Activated B cell treated with CpG ODN at 0.5 μM for 24 hours (primary cell): ENCODE measurements at regions of chr18 and their contacts with region 1.

Region 1: GRCh38 chr18:35497370-35498197 is at the start of gene INO80C:
- DNase-seq: peak; percentile 95
- ATAC-seq: peak; percentile 88
- H3K4me3 Mint-ChIP-seq: peak within 1 kb of the TSS; percentile 100
- H3K27ac Mint-ChIP-seq: peak within 1 kb of the TSS; percentile 100
- H3K4me1 Mint-ChIP-seq: peaks cover 51% of the 10 kb centered on the region
- H3K27me3 Mint-ChIP-seq: no peaks in the 10 kb centered on the region
- CTCF ChIP-seq: no peak
- total RNA-seq, gene INO80C: 31.6 and 35.9 TPM in 2 replicates

Region 2: GRCh38 chr18:34976899-34977837 is 520.4 kb before region 1 on chr18:
- CTCF ChIA-PET with region 1: no interaction called
- POLR2A ChIA-PET with region 1: no interaction called
- intact Hi-C with region 1: loop called (anchors 5 kb)
- DNase-seq: peak; percentile 77
- ATAC-seq: peak; percentile 76
- H3K4me3 Mint-ChIP-seq: peak overlapping the region; percentile 89
- H3K27ac Mint-ChIP-seq: no peak overlapping the region
- H3K4me1 Mint-ChIP-seq: peaks cover 23% of the 10 kb centered on the region
- H3K27me3 Mint-ChIP-seq: peaks cover 18% of the 10 kb centered on the region
- CTCF ChIP-seq: no peak

Region 3: GRCh38 chr18:35290073-35290735 is 207.4 kb before region 1 on chr18 and contains the start of gene ZSCAN30:
- CTCF ChIA-PET with region 1: interaction called, 3 read pairs
- POLR2A ChIA-PET with region 1: interaction called, 7 read pairs
- intact Hi-C with region 1: loop called (anchors 2 kb)
- DNase-seq: peak; percentile 92
- ATAC-seq: peak; percentile 97
- H3K4me3 Mint-ChIP-seq: peak within 1 kb of the TSS; percentile 100
- H3K27ac Mint-ChIP-seq: peak within 1 kb of the TSS; percentile 99
- H3K4me1 Mint-ChIP-seq: peaks cover 51% of the 10 kb centered on the region
- H3K27me3 Mint-ChIP-seq: peaks cover 2% of the 10 kb centered on the region
- CTCF ChIP-seq: no peak
- total RNA-seq, gene ZSCAN30: 21.2 and 23.8 TPM in 2 replicates

Region 4: DNA sequence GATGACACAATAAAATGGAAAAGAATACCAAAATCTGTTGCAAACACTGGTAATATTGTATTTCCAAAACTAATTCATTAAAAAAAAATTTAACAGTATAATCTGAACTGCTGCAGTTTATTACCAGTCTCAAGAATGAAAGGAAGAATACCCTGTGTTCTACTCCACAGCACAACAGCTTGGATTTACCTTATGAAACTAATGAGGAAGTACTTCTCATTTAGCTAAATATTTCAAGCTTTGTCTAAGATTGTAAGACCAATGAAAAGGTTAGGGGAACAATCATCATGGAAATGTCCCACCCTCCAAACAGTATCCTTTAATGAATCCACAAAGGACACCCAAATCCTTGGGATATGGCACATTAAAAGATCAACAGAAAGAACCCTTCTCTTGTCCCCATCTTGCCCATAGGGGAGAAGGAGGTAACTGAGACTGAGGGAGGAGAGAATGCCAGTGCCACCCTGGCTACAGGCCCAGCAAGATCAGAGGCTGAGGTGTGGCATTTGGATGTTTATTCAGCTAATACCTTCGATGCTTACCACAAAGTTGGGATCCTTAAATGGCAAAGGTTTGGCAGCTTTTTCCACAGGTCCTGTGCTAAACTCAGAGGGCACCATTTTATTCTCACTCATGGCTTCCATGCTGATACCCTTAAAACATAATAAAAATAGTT is 17.5 kb before region 1 on chr18:
- CTCF ChIA-PET with region 1: interaction called, 3 read pairs
- POLR2A ChIA-PET with region 1: interaction called, 4 read pairs
- intact Hi-C with region 1: loop called (anchors 2 kb)
- DNase-seq: no peak
- ATAC-seq: no peak
- H3K4me3 Mint-ChIP-seq: no peak overlapping the region
- H3K27ac Mint-ChIP-seq: peak overlapping the region; percentile 26
- H3K4me1 Mint-ChIP-seq: peaks cover 15% of the 10 kb centered on the region
- H3K27me3 Mint-ChIP-seq: no peaks in the 10 kb centered on the region
- CTCF ChIP-seq: no peak

Region 5: DNA sequence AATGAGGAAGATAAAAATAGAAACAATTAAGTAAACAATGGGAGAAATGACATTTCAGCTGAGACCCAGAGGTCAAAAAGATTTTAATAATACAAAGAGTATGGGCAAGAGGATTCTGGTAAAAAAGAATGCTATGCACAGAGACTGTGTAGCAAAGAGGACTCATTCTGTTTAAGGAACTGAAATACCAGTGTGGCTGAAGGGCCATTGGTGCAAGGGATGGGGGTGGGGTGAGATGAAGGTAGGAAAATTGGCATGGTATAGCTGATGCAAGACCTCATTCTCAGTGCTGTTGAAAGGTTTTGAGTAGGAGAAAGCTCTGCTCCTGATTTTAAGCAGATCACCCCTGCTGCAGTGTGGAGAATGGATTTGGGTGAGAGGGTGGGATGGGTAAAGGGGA is 94.7 kb after region 1 on chr18:
- CTCF ChIA-PET with region 1: interaction called, 3 read pairs
- POLR2A ChIA-PET with region 1: interaction called, 19 read pairs
- intact Hi-C with region 1: no loop called
- DNase-seq: peak; percentile 52
- ATAC-seq: peak; percentile 96
- H3K4me3 Mint-ChIP-seq: no peak overlapping the region
- H3K27ac Mint-ChIP-seq: no peak overlapping the region
- H3K4me1 Mint-ChIP-seq: peaks cover 49% of the 10 kb centered on the region
- H3K27me3 Mint-ChIP-seq: no peaks in the 10 kb centered on the region
- CTCF ChIP-seq: no peak

Region 6: DNA sequence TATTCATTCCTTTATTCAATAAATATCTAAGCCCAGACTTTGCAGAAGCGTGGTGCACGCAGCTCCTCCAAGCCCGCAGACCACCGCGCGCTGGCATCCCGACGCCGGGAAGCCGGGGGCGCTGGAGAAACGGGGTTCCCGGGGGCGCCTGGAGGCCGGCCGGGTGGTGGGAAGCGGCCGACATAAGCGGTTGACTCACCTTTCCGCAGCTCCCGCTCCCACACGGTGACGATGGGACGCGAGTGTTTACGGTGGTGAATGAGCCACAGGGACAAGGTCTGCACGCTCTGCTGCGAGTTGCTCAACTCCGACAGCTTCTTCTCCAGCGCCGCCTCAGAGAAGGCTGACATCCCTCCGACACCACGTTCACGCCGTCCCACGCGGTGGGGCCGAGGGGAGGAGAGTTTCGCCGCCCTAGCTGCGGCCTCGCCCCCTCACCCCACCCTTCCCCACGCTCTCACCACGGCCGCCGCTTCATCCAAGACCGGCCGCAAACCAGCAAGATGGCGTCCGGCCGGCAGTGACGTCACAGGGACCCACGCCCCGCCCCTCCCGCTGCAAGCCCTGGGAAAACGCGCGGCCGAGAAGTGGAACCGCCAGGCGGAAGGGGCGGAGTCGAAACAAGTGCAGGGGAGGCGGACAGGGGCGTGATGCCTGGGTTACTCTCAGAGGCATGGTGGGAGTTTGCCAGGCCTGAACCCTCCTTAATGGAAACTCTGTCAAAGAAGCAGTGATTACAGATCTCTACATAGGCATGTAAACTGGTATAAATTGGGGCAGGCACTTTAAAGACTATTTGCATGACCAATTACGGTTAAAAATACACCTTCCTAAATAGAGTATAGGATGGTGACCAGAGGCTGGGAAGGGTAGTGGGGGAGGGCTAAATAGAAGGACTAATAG is 569.7 kb after region 1 on chr18 and contains the start of gene RPRD1A:
- CTCF ChIA-PET with region 1: no interaction called
- POLR2A ChIA-PET with region 1: interaction called, 3 read pairs
- intact Hi-C with region 1: loop called (anchors 1 kb)
- DNase-seq: peak; percentile 99
- ATAC-seq: peak; percentile 91
- H3K4me3 Mint-ChIP-seq: peak within 1 kb of the TSS; percentile 93
- H3K27ac Mint-ChIP-seq: peak within 1 kb of the TSS; percentile 88
- H3K4me1 Mint-ChIP-seq: peaks cover 44% of the 10 kb centered on the region
- H3K27me3 Mint-ChIP-seq: no peaks in the 10 kb centered on the region
- CTCF ChIP-seq: no peak
- total RNA-seq, gene RPRD1A: 40.7 and 47.6 TPM in 2 replicates